Endothelial cell of umbilical vein (primary cell): ENCODE measurements at regions of chr4 and their contacts with region 1.

Region 1: GRCh38 chr4:107736924-107737448 is 17.0 kb upstream of the PAPSS1 start:
- DNase-seq: peak; percentile 58
- H3K4me3 ChIP-seq: no peak overlapping the region
- H3K27ac ChIP-seq: no peak overlapping the region
- H3K4me1 ChIP-seq: peaks cover 6% of the 10 kb centered on the region
- H3K27me3 ChIP-seq: no peaks in the 10 kb centered on the region
- CTCF ChIP-seq: peak; percentile 64 to 77
- POLR2A ChIP-seq: no peak

Region 2: GRCh38 chr4:107037199-107037584 is 699.8 kb before region 1 on chr4:
- CTCF ChIA-PET with region 1: interaction called, 14 read pairs
- POLR2A ChIA-PET with region 1: no interaction called
- dilution Hi-C with region 1: no loop called
- intact Hi-C with region 1: loop called (anchors 2 kb)
- DNase-seq: peak; percentile 43
- H3K4me3 ChIP-seq: peak overlapping the region in 1 of 3 experiments; percentile 84
- H3K27ac ChIP-seq: no peak overlapping the region
- H3K4me1 ChIP-seq: peaks cover 34% of the 10 kb centered on the region
- H3K27me3 ChIP-seq: peaks cover 17 to 19% of the 10 kb centered on the region in 2 experiments
- CTCF ChIP-seq: peak; percentile 65 to 77
- POLR2A ChIP-seq: no peak

Region 3: DNA sequence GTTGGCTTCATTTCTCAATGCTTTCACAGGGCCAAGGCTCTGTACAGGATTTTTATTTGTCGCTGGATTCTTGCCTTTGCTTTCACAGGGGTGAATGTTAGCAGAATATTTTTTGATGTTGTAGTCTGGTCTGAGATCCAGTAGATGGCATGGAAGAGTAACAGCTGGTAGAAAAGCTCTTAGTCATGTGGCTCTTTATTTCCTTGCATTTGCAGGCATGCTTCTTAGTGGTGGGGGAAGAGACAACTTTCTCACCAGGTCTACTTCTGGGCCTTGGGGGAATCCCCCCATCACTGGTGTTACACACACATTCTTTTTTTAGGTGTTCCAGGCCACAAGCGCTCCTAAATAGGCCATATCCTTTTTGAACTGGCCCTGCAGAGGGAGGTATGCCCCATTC is 642.7 kb before region 1 on chr4:
- CTCF ChIA-PET with region 1: interaction called, 10 read pairs
- POLR2A ChIA-PET with region 1: no interaction called
- dilution Hi-C with region 1: no loop called
- intact Hi-C with region 1: loop called (anchors 1 kb)
- DNase-seq: peak; percentile 50
- H3K4me3 ChIP-seq: no peak overlapping the region
- H3K27ac ChIP-seq: no peak overlapping the region
- H3K4me1 ChIP-seq: no peaks in the 10 kb centered on the region
- H3K27me3 ChIP-seq: no peaks in the 10 kb centered on the region
- CTCF ChIP-seq: peak; percentile 37 to 53
- POLR2A ChIP-seq: no peak

Region 4: GRCh38 chr4:107279707-107280106 is 457.3 kb before region 1 on chr4:
- CTCF ChIA-PET with region 1: interaction called, 4 read pairs
- POLR2A ChIA-PET with region 1: no interaction called
- dilution Hi-C with region 1: no loop called
- intact Hi-C with region 1: loop called (anchors 10 kb)
- DNase-seq: peak; percentile 60
- H3K4me3 ChIP-seq: no peak overlapping the region
- H3K27ac ChIP-seq: peak overlapping the region; percentile 55
- H3K4me1 ChIP-seq: peaks cover 25% of the 10 kb centered on the region
- H3K27me3 ChIP-seq: no peaks in the 10 kb centered on the region
- CTCF ChIP-seq: no peak
- POLR2A ChIP-seq: no peak

Region 5: DNA sequence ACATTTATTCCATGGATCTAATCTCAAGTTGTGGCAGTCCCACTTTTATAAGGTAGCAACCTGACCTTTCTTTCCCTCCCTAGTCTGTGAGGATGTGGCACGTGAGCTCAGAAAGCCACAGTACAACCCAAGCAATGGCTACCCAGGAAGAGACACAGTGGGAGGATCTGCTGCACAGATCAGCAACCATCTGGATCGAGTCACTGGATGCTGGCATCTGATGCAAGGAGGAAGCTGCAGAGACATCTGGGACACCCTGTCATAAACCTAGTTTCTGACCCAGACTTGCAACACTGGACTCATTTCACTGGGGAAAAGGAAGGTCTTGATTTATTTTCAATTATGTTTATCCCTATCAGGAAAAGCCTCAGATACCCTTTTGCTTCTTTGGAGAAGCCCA is 344.0 kb before region 1 on chr4:
- CTCF ChIA-PET with region 1: no interaction called
- POLR2A ChIA-PET with region 1: no interaction called
- dilution Hi-C with region 1: no loop called
- intact Hi-C with region 1: loop called (anchors 10 kb)
- DNase-seq: no peak
- H3K4me3 ChIP-seq: no peak overlapping the region
- H3K27ac ChIP-seq: no peak overlapping the region
- H3K4me1 ChIP-seq: no peaks in the 10 kb centered on the region
- H3K27me3 ChIP-seq: no peaks in the 10 kb centered on the region
- CTCF ChIP-seq: no peak
- POLR2A ChIP-seq: no peak

Region 6: DNA sequence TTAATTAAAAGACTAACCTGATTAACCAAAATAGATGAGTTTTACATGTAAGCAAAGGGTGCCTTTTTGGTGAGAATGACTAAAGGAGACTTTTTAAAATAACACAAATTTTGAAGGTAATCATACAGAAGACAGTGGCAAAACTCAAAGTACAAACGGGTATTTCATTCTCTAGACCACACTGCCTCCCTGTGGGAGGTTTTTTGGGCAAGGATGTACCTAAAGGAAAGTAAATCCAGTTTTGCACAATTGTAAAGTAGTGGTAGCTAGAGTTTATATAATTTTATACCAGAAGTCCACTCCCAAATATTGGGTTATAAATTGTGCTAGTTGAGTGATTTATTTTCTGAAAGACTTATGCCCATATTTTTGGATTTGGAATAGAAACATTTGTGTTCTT is 217.9 kb before region 1 on chr4:
- CTCF ChIA-PET with region 1: interaction called, 8 read pairs
- POLR2A ChIA-PET with region 1: no interaction called
- dilution Hi-C with region 1: no loop called
- intact Hi-C with region 1: loop called (anchors 5 kb)
- DNase-seq: peak; percentile 44
- H3K4me3 ChIP-seq: no peak overlapping the region
- H3K27ac ChIP-seq: no peak overlapping the region
- H3K4me1 ChIP-seq: no peaks in the 10 kb centered on the region
- H3K27me3 ChIP-seq: no peaks in the 10 kb centered on the region
- CTCF ChIP-seq: peak in 1 of 2 donors; percentile 29
- POLR2A ChIP-seq: no peak

Region 7: GRCh38 chr4:107719922-107720722 is 16.9 kb before region 1 on chr4 and contains the start of gene PAPSS1:
- CTCF ChIA-PET with region 1: interaction called, 19 read pairs
- POLR2A ChIA-PET with region 1: no interaction called
- dilution Hi-C with region 1: no loop called
- intact Hi-C with region 1: no loop called
- DNase-seq: peak; percentile 99
- H3K4me3 ChIP-seq: peak within 1 kb of the TSS; percentile 56 to 92 (median 84)
- H3K27ac ChIP-seq: peak within 1 kb of the TSS; percentile 42
- H3K4me1 ChIP-seq: peaks cover 10% of the 10 kb centered on the region
- H3K27me3 ChIP-seq: no peaks in the 10 kb centered on the region
- CTCF ChIP-seq: no peak
- POLR2A ChIP-seq: peak; percentile 84
- total RNA-seq, gene PAPSS1: 69.6 and 72.0 TPM in 2 replicates